ENCODE measurements at regions of chr1 and their contacts with region 1.

Region 1: GRCh38 chr1:117367047-117368018 is at the start of gene MAN1A2:
- DNase-seq: peak; percentile 81
- ATAC-seq: peak; percentile 74
- H3K4me3 ChIP-seq: peak within 1 kb of the TSS; percentile 91
- H3K27ac ChIP-seq: peak within 1 kb of the TSS; percentile 58
- H3K4me1 ChIP-seq: peaks cover 41% of the 10 kb centered on the region
- H3K27me3 ChIP-seq: no peaks in the 10 kb centered on the region
- CTCF ChIP-seq: no peak
- total RNA-seq, gene MAN1A2: 18.0 and 21.1 TPM in 2 replicates

Region 2: DNA sequence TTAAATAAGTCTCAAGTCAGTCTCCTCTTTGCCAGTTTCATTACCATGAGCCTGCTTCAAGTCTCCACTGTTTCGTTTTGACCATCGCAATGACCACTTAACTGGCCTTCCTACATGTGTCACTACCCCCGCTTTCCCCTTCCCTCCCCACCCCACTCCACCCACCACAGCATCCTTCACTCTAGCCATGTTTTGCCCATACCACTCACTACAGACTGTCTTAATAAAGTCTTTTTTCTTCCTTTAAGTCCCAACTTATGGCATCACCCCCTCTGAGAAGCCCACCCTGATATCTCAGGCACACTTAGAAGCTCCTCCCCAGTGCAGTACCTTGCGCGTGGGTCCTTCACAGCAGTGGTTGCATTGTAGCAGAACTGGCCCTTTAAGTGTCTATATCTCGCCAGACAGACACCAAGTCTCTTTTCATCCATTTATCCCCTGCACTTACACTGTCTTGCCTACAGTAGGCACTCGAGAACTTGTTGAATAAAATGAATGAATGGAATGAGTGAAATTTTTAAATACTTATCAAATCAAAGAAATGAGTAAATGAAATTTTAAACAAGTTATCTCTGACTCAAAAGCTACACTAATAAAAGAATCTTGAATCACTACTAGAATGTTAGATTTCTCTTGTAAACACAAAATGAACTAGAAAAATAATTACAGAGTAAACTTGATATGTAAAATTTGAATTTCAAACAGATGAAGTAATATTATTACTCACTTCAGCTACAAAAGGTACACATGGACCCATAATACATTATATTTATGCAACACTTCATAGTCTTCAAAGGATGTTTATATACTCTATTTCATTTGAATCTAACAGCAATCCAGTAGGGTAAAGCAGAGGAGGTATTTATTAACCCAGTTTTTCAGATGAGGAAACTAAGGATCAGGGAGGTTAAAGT is 54.9 kb before region 1 on chr1:
- CTCF ChIA-PET with region 1: no interaction called
- POLR2A ChIA-PET with region 1: no interaction called
- intact Hi-C with region 1: loop called (anchors 2 kb)
- DNase-seq: peak; percentile 66
- ATAC-seq: peak; percentile 82
- H3K4me3 ChIP-seq: no peak overlapping the region
- H3K27ac ChIP-seq: no peak overlapping the region
- H3K4me1 ChIP-seq: no peaks in the 10 kb centered on the region
- H3K27me3 ChIP-seq: no peaks in the 10 kb centered on the region
- CTCF ChIP-seq: peak; percentile 78

Region 3: GRCh38 chr1:117416546-117417125 is 49.3 kb after region 1 on chr1:
- CTCF ChIA-PET with region 1: no interaction called
- POLR2A ChIA-PET with region 1: interaction called, 4 read pairs
- intact Hi-C with region 1: loop called (anchors 5 kb)
- DNase-seq: no peak
- ATAC-seq: no peak
- H3K4me3 ChIP-seq: no peak overlapping the region
- H3K27ac ChIP-seq: no peak overlapping the region
- H3K4me1 ChIP-seq: peaks cover 26% of the 10 kb centered on the region
- H3K27me3 ChIP-seq: no peaks in the 10 kb centered on the region
- CTCF ChIP-seq: no peak

Region 4: GRCh38 chr1:117544509-117545109 is 177.3 kb after region 1 on chr1:
- CTCF ChIA-PET with region 1: no interaction called
- POLR2A ChIA-PET with region 1: interaction called, 21 read pairs
- intact Hi-C with region 1: no loop called
- DNase-seq: no peak
- ATAC-seq: no peak
- H3K4me3 ChIP-seq: no peak overlapping the region
- H3K27ac ChIP-seq: no peak overlapping the region
- H3K4me1 ChIP-seq: no peaks in the 10 kb centered on the region
- H3K27me3 ChIP-seq: no peaks in the 10 kb centered on the region
- CTCF ChIP-seq: no peak

Region 5: DNA sequence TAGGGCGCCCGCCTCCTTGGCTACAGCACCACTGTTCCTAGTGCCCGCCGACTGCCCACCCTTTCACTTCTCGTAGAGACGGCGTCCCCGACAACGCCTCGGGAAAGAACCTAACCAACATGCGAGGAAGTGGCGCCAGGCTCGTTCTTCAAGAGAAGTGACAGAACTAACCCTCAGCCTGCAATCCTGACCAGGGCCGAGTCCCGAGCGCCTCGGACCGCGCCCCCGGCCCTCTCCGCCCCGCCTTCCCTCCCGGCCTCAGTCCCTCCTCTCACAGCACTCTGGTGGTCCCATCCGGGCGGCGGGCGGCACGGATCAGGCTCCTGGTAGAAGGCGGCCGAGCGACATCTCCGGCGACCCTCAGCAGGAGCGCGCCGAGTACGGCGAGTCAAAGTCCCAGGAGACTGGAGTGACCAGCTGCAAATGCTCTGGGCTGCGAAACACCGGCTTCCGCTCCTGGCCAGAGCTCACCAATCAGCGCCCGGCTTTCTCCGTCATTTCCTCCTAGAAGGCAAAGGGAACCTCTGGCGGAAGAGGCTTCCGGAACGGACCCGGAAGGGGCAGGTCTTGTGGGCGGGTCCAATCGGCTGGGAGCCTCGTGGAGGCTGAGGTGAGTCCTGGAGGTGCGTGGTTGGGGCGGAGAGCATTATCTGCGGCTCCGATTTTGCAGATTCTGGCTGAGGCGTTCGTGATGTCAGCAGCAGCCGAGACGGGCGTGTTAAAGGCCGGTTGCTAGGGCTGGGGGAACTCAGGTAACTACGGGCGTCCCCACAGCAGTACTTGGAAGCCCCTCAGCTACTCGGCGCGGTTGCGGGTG is 562.0 kb after region 1 on chr1 and contains the starts of genes GDAP2 and WDR3:
- CTCF ChIA-PET with region 1: no interaction called
- POLR2A ChIA-PET with region 1: no interaction called
- intact Hi-C with region 1: loop called (anchors 5 kb)
- DNase-seq: peak; percentile 98
- ATAC-seq: peak; percentile 83
- H3K4me3 ChIP-seq: peak within 1 kb of the TSS; percentile 86
- H3K27ac ChIP-seq: peak within 1 kb of the TSS; percentile 31
- H3K4me1 ChIP-seq: peaks cover 53% of the 10 kb centered on the region
- H3K27me3 ChIP-seq: no peaks in the 10 kb centered on the region
- CTCF ChIP-seq: no peak
- total RNA-seq, gene GDAP2: 17.7 and 20.7 TPM in 2 replicates
- total RNA-seq, gene WDR3: 38.2 and 57.8 TPM in 2 replicates